IMR-90 (cell line): ENCODE measurements at regions of chr11 and their contacts with region 1.

Region 1: DNA sequence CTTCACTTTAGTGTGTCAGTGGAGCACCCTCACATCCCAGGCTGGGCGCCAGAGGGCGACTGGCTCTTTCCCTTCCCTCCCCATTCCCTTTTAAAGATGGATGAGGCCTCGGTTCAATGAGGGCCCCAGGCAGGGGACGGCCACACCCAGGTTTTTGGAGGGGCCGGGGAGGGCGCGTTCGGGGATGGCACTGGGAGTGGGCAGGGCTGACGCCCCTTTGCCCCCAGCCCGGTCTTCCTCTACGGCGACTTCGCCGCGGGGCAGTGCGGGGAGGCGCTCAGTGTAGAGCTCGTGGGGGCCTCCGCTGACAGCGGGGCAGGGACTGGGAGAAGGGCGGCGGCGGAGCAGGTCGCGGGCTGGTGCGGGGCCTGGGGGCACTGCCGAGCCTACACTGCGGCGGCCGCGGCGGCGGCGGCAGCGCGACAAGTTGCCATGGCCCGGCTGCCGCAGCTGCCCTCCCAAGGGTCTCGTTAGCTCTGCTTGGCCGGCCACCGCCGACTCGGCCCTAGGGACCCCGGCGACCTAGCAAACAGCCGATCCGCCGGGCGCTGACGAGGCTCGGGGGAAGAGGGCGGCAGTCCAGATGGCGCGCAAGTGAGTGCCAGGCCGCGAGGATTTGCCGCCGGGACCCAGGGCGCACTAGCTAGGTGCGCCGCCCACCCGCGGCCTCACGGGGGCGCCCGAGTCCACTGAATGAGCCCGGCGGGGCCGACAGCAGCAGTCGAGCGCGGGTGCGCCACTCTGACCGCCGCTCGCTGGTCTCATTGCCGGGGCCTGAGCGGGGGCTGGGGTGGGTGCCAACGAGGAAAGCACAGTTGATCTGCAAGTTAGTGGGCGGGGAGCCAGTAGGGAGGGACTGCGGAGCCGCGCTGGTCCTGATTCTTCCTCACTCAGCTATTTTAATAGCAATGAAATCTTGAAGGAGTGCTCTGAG is 92.7 kb downstream of the RRM1 start:
- DNase-seq: peak; percentile 70
- ATAC-seq: peak; percentile 98
- H3K4me3 ChIP-seq: peak overlapping the region; percentile 50
- H3K27ac ChIP-seq: peak overlapping the region; percentile 24; the same call in 1 of the 2 replicates
- H3K4me1 ChIP-seq: no peaks in the 10 kb centered on the region; the same call in 1 of the 2 replicates
- H3K27me3 ChIP-seq: no peaks in the 10 kb centered on the region; the same call in 1 of the 2 replicates
- CTCF ChIP-seq: peak; percentile 97
- POLR2A ChIP-seq: peak; percentile 40; the same call in 1 of the 2 replicates
- RAD21 ChIP-seq: peak; percentile 91

Region 2: DNA sequence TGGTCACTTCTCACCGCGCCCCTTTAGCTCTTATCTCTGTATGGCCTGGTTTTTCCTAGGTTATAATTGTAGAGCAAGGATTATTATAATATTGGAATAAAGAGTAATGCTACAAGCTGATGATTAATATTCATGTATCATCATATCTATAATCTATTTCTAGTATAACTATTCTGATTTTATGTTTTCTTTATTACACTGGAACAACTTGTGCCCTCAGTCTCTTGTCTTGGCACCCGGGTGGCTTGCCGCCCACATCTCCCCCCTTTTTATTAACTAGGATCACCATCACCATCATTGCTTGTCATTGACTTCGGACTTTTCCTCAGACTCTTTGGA is 306.1 kb after region 1 on chr11:
- CTCF ChIA-PET with region 1: interaction called, 15 read pairs
- POLR2A ChIA-PET with region 1: no interaction called
- dilution Hi-C with region 1: no loop called
- in situ Hi-C with region 1: no loop called
- intact Hi-C with region 1: loop called (anchors 1 kb)
- DNase-seq: no peak
- ATAC-seq: no peak
- H3K4me3 ChIP-seq: no peak overlapping the region
- H3K27ac ChIP-seq: no peak overlapping the region
- H3K4me1 ChIP-seq: no peaks in the 10 kb centered on the region
- H3K27me3 ChIP-seq: peaks cover 14% of the 10 kb centered on the region
- CTCF ChIP-seq: no peak
- POLR2A ChIP-seq: no peak
- RAD21 ChIP-seq: no peak

Region 3: DNA sequence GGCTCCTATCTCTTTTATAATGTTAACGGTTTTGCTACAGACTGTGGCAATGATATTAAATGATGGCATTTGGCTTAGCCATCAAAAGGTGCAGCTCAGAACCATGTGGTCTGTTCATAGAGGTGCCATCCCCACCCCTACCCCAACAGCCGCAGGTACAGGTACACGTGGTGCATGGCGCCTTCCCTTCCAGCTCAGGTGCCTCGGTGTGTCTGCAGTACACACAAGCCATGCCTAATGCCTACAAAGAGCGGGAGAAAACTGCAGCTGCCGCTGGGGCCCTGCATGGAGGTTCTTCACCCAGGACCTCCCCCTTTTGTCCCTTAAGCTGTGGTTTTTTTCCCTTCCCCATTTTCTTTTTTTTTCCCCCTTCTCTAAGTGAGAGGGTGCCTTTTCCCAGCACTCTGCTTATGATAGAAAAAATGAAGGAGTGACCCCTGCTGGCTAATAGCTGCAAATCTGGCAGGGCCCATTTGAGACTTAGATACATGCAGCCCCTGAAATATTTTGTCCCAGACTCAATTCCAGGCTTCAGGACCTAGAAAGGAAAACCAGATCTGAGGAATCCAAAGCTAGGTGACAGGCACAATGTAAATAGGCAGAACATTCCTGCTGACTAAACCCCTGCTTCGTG is 364.1 kb after region 1 on chr11:
- CTCF ChIA-PET with region 1: interaction called, 6 read pairs
- POLR2A ChIA-PET with region 1: no interaction called
- dilution Hi-C with region 1: no loop called
- in situ Hi-C with region 1: no loop called
- intact Hi-C with region 1: loop called (anchors 1 kb)
- DNase-seq: peak; percentile 16
- ATAC-seq: peak; percentile 67
- H3K4me3 ChIP-seq: no peak overlapping the region
- H3K27ac ChIP-seq: no peak overlapping the region
- H3K4me1 ChIP-seq: no peaks in the 10 kb centered on the region
- H3K27me3 ChIP-seq: no peaks in the 10 kb centered on the region
- CTCF ChIP-seq: peak; percentile 39
- POLR2A ChIP-seq: no peak
- RAD21 ChIP-seq: no peak

Region 4: DNA sequence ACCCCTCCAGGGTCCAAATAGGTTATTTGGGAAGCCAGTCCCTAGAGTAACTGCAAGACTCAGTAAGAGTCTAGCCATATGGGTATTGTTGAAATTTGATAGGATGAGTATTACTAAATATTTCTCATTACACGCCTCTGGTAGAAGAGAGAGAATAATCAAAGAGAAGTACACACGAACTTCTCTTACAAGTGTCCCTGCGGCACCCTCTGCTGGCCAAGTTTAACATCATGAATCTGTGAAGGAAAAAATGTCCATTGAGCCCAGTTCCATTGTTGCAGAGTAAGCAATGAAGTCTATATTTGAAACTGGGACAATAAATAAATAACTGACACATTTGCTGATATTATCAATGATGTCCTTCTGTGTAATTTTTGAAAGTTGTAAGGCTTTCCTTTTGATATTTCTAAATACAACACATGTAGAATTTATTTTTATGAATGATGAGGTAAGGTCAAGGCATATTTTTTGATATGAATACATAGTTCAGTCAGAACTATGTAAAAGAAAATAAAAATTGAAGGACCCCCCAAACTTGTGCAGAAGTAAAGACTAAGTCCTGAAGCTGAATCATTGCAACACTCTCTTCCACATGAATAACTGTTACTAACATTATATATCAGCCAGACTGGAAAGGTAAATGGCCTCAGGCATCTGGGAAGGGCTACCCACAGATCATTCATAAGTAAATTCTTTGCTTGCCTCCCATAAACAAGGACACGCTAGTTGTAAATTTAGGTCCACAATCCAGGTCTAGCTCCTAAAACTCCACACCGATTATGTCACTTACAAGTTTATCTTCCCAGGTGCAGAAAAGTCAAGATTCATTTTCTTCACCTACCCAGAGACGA is 817.3 kb after region 1 on chr11:
- CTCF ChIA-PET with region 1: interaction called, 3 read pairs
- POLR2A ChIA-PET with region 1: no interaction called
- dilution Hi-C with region 1: no loop called
- in situ Hi-C with region 1: no loop called
- intact Hi-C with region 1: loop called (anchors 2 kb)
- DNase-seq: peak; percentile 61
- ATAC-seq: peak; percentile 73
- H3K4me3 ChIP-seq: no peak overlapping the region
- H3K27ac ChIP-seq: no peak overlapping the region
- H3K4me1 ChIP-seq: no peaks in the 10 kb centered on the region
- H3K27me3 ChIP-seq: no peaks in the 10 kb centered on the region; the same call in 1 of the 2 replicates
- CTCF ChIP-seq: peak; percentile 78
- POLR2A ChIP-seq: no peak
- RAD21 ChIP-seq: peak; percentile 80